IMR-90 (cell line): ENCODE measurements at regions of chr7 and their contacts with region 1.

Region 1: DNA sequence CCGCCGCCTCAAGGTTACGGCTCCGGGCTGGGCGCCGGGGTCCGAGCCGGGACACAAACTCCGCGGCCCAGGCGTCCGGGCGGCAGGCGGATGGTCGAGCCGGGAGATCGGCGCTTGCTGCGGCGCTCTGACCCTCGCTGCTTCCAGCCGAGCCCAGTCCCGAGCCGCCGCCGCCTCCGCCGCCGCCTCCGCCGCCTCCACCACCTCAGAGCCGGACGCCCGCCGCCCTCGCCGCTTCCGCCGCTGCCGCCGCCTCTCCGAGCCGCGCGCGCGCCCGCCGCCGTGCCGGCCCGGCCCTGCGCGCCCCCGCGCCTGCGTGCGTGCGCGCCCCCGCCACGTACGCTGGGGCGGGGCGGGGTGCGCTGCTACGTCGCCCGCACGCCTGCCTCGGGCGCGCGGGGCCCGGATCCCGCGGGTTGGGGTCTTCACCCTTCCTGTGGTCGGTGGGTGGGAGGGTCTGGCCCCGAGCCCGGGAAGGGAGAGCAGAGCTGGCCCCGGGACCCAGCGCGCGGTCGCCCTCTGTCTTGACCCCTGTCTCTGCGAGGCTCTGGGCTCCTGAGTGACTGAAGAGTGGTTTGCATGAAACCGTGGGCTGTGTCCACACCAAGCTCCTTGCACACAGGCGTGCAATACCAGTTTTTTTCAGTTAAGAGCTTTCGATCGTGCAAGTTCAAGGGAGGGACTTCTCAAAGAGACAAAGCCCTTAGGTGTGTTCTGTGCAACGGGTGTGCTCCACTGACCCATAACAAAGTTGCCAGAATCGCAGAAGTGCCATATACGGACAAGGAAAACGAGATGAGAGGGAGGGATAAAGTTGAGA is at the start of gene SMURF1:
- DNase-seq: peak; percentile 47
- ATAC-seq: peak; percentile 55
- H3K4me3 ChIP-seq: peak within 1 kb of the TSS; percentile 99
- H3K27ac ChIP-seq: peak within 1 kb of the TSS; percentile 98
- H3K4me1 ChIP-seq: peaks cover 3% of the 10 kb centered on the region
- H3K27me3 ChIP-seq: no peaks in the 10 kb centered on the region
- CTCF ChIP-seq: no peak
- POLR2A ChIP-seq: no peak; the same call in 1 of the 2 replicates
- RAD21 ChIP-seq: peak; percentile 4; the same call in 1 of the 2 replicates
- total RNA-seq, gene SMURF1: 20.3 and 21.7 TPM in 2 replicates

Region 2: GRCh38 chr7:99072126-99072525 is 71.9 kb before region 1 on chr7:
- CTCF ChIA-PET with region 1: no interaction called
- POLR2A ChIA-PET with region 1: no interaction called
- dilution Hi-C with region 1: no loop called
- in situ Hi-C with region 1: no loop called
- intact Hi-C with region 1: loop called (anchors 2 kb)
- DNase-seq: no peak
- ATAC-seq: no peak
- H3K4me3 ChIP-seq: no peak overlapping the region
- H3K27ac ChIP-seq: no peak overlapping the region
- H3K4me1 ChIP-seq: peaks cover 6% of the 10 kb centered on the region
- H3K27me3 ChIP-seq: no peaks in the 10 kb centered on the region
- CTCF ChIP-seq: no peak
- POLR2A ChIP-seq: no peak
- RAD21 ChIP-seq: no peak

Region 3: GRCh38 chr7:99312316-99313203 is 168.5 kb after region 1 on chr7:
- CTCF ChIA-PET with region 1: no interaction called
- POLR2A ChIA-PET with region 1: no interaction called
- dilution Hi-C with region 1: no loop called
- in situ Hi-C with region 1: no loop called
- intact Hi-C with region 1: loop called (anchors 1 kb)
- DNase-seq: peak; percentile 52
- ATAC-seq: peak; percentile 85
- H3K4me3 ChIP-seq: no peak overlapping the region
- H3K27ac ChIP-seq: no peak overlapping the region
- H3K4me1 ChIP-seq: no peaks in the 10 kb centered on the region
- H3K27me3 ChIP-seq: no peaks in the 10 kb centered on the region
- CTCF ChIP-seq: peak; percentile 91
- POLR2A ChIP-seq: peak; percentile 48; the same call in 1 of the 2 replicates
- RAD21 ChIP-seq: peak; percentile 94

Region 4: GRCh38 chr7:99325545-99326407 is 181.7 kb after region 1 on chr7 and contains the start of gene ARPC1A:
- CTCF ChIA-PET with region 1: no interaction called
- POLR2A ChIA-PET with region 1: interaction called, 6 read pairs
- dilution Hi-C with region 1: no loop called
- in situ Hi-C with region 1: no loop called
- intact Hi-C with region 1: loop called (anchors 5 kb)
- DNase-seq: peak; percentile 91
- ATAC-seq: peak; percentile 94
- H3K4me3 ChIP-seq: peak within 1 kb of the TSS; percentile 82
- H3K27ac ChIP-seq: peak within 1 kb of the TSS; percentile 86
- H3K4me1 ChIP-seq: 0 out of 2 replicates have a peak, but pooled peaks cover 2% of the 10 kb centered on the region
- H3K27me3 ChIP-seq: no peaks in the 10 kb centered on the region
- CTCF ChIP-seq: peak; percentile 33
- POLR2A ChIP-seq: peak; percentile 75
- RAD21 ChIP-seq: peak; percentile 36
- total RNA-seq, gene ARPC1A: 321 and 327 TPM in 2 replicates